Calu3 (cell line): ENCODE measurements at regions of chr17 and their contacts with region 1.

Region 1: DNA sequence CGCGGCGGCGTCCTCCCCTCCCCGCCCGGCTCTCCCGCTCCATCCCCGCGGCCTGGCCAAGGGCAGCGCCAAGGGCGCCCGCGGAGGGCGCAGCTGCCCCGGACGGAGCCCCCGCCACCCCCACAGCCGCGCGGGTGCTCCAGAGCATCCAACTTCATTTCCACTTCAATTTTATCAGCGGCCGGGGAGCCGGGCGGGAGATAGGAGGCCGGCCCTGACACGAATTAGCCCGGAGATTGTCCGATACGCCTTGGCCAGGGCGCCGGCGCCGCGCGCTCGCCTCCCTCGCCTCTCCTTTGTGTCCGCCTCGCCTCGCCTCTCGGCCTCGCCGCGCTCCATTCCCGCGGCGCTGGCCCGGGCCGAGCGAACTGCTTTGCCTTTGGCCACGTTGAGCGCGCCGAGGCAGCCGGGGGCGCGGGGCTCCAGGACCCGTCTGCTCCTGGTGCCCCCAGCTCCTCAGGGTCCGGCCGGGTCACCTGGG is 129.1 kb upstream of the LHX1 start:
- DNase-seq: no peak
- H3K4me3 Mint-ChIP-seq: peak overlapping the region; percentile 29
- H3K27ac Mint-ChIP-seq: no peak overlapping the region
- H3K4me1 Mint-ChIP-seq: no peaks in the 10 kb centered on the region
- H3K27me3 Mint-ChIP-seq: peaks cover 86% of the 10 kb centered on the region
- CTCF ChIP-seq: no peak

Region 2: GRCh38 chr17:36791150-36791941 is 16.9 kb before region 1 on chr17:
- CTCF ChIA-PET with region 1: interaction called, 12 read pairs
- intact Hi-C with region 1: no loop called
- DNase-seq: no peak
- H3K4me3 Mint-ChIP-seq: no peak overlapping the region
- H3K27ac Mint-ChIP-seq: no peak overlapping the region
- H3K4me1 Mint-ChIP-seq: peaks cover 8% of the 10 kb centered on the region
- H3K27me3 Mint-ChIP-seq: peaks cover 100% of the 10 kb centered on the region
- CTCF ChIP-seq: no peak